ENCODE measurements at regions of chr2 and their contacts with region 1.

Region 1: GRCh38 chr2:37389989-37390765 is 45.7 kb downstream of the QPCT start:
- DNase-seq: peak; percentile 28
- H3K4me3 ChIP-seq: no peak overlapping the region
- H3K27ac ChIP-seq: peak overlapping the region in 2 of 4 donors; percentile 28 to 40
- H3K4me1 ChIP-seq: peaks cover 0 to 15% (median 0%) of the 10 kb centered on the region in 4 donors
- H3K27me3 ChIP-seq: no peaks in the 10 kb centered on the region
- CTCF ChIP-seq: no peak
- EP300 ChIP-seq: no peak
- POLR2A ChIP-seq: no peak

Region 2: GRCh38 chr2:36951574-36951973 is 438.6 kb before region 1 on chr2:
- in situ Hi-C with region 1: no loop called
- intact Hi-C with region 1: no loop called
- DNase-seq: no peak
- H3K4me3 ChIP-seq: no peak overlapping the region
- H3K27ac ChIP-seq: no peak overlapping the region
- H3K4me1 ChIP-seq: peaks cover 0 to 5% (median 2%) of the 10 kb centered on the region in 4 donors
- H3K27me3 ChIP-seq: no peaks in the 10 kb centered on the region
- CTCF ChIP-seq: no peak
- EP300 ChIP-seq: no peak
- POLR2A ChIP-seq: no peak

Region 3: DNA sequence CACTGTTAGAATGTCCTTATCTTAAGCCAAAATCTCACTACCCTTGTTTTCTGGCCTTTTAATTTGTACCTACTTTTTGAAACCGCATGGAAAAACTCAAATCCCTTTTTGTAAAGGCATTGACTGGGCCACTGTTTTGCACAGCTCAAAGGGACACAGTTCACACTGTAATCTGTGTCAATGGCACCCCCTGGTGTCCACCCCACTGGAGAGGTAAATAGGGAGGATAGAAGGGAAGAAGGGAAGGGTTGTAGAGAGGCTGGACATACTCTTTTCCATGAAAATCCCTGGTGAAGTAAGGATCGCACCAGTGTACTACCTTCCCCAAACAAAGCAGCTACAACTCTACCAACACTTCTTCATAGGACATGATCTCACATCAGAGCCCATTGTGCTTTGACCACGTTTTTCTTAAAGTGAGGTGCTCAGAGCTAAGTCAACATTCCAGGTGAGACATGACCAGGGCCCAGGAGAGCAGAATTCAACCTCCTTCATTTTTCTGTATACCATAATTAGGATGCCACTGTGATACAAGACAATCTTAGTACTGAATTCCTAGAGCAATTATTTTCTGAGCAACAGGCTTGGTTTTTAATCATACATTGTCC is 442.5 kb after region 1 on chr2:
- in situ Hi-C with region 1: loop called in 1 of 4 experiments (anchors 10 kb)
- intact Hi-C with region 1: no loop called
- DNase-seq: peak; percentile 92
- H3K4me3 ChIP-seq: no peak overlapping the region
- H3K27ac ChIP-seq: peak overlapping the region in 2 of 4 donors; percentile 8 to 52
- H3K4me1 ChIP-seq: peaks cover 0 to 11% (median 2%) of the 10 kb centered on the region in 4 donors
- H3K27me3 ChIP-seq: no peaks in the 10 kb centered on the region
- CTCF ChIP-seq: peak; percentile 71 to 94 (median 80)
- EP300 ChIP-seq: no peak
- POLR2A ChIP-seq: no peak

Region 4: GRCh38 chr2:37877457-37878315 is 487.5 kb after region 1 on chr2:
- in situ Hi-C with region 1: no loop called
- intact Hi-C with region 1: loop called (anchors 5 kb)
- DNase-seq: no peak
- H3K4me3 ChIP-seq: no peak overlapping the region
- H3K27ac ChIP-seq: no peak overlapping the region
- H3K4me1 ChIP-seq: peaks cover 0 to 4% (median 1%) of the 10 kb centered on the region in 4 donors
- H3K27me3 ChIP-seq: no peaks in the 10 kb centered on the region
- CTCF ChIP-seq: peak; percentile 68 to 85 (median 77)
- EP300 ChIP-seq: no peak
- POLR2A ChIP-seq: no peak

Region 5: GRCh38 chr2:38274286-38275276 is 884.4 kb after region 1 on chr2:
- in situ Hi-C with region 1: loop called in 1 of 4 experiments (anchors 25 kb)
- intact Hi-C with region 1: no loop called
- DNase-seq: no peak
- H3K4me3 ChIP-seq: no peak overlapping the region
- H3K27ac ChIP-seq: no peak overlapping the region
- H3K4me1 ChIP-seq: peaks cover 0 to 13% (median 0%) of the 10 kb centered on the region in 4 donors
- H3K27me3 ChIP-seq: no peaks in the 10 kb centered on the region
- CTCF ChIP-seq: peak; percentile 56 to 78 (median 57)
- EP300 ChIP-seq: no peak
- POLR2A ChIP-seq: no peak